Prostate gland (tissue), 2 donors: ENCODE measurements at regions of chr19 and their contacts with region 1.

Region 1: GRCh38 chr19:10870955-10871603 is at the start of gene CARM1:
- DNase-seq: peak; percentile 99
- H3K4me3 ChIP-seq: peak within 1 kb of the TSS; percentile 77 to 81
- H3K27ac ChIP-seq: peak within 1 kb of the TSS; percentile 74 to 80
- H3K4me1 ChIP-seq: no peaks in the 10 kb centered on the region
- H3K27me3 ChIP-seq: no peaks in the 10 kb centered on the region
- CTCF ChIP-seq: peak; percentile 55 to 98 (median 77)
- POLR2A ChIP-seq: peak; percentile 21
- total RNA-seq, gene CARM1: 14.5 to 54.4 TPM

Region 2: DNA sequence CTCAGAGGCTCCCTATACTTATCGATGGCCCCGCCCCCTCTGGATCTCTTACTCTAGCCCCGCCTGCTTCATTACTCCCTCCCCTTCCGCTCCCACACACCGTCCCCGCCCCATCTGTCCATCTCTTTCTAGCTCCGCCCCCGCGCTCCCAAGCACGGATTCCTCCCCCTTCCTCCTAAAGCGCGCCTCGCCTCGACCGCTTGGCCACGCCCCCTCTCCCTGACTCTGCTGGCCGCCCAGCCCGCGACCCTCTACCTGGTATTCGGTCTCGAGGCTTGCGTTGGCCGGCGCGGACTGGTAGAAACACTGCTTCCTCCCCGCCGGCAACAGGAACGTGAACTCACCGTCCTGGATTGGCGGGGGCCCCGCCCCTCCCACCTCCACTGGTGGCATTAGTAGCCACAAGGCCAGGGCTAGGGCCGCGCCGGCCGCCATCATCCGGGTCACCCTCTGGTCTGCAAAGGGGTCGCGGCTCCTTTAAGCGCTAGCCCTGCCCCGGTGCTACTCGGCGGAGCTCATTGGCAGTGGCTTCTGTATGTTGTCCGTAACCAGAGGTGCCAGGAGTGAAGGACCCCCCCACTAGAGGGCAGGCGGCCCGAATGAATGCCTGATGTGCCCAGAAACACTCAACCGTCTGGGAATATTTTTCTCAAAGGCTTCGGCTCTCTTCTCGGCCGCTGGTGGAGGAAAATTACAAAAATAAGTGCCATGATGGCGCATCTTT is 35.2 kb before region 1 on chr19 and contains the start of gene TMED1:
- intact Hi-C with region 1: loop called (anchors 2 kb)
- DNase-seq: peak; percentile 88
- H3K4me3 ChIP-seq: peak within 1 kb of the TSS; percentile 69 to 74
- H3K27ac ChIP-seq: peak within 1 kb of the TSS; percentile 98
- H3K4me1 ChIP-seq: no peaks in the 10 kb centered on the region
- H3K27me3 ChIP-seq: no peaks in the 10 kb centered on the region
- CTCF ChIP-seq: peak in 3 of 4 experiments; percentile 35 to 76 (median 69)
- POLR2A ChIP-seq: peak; percentile 56
- total RNA-seq, gene TMED1: 41.9 to 47.8 TPM

Region 3: DNA sequence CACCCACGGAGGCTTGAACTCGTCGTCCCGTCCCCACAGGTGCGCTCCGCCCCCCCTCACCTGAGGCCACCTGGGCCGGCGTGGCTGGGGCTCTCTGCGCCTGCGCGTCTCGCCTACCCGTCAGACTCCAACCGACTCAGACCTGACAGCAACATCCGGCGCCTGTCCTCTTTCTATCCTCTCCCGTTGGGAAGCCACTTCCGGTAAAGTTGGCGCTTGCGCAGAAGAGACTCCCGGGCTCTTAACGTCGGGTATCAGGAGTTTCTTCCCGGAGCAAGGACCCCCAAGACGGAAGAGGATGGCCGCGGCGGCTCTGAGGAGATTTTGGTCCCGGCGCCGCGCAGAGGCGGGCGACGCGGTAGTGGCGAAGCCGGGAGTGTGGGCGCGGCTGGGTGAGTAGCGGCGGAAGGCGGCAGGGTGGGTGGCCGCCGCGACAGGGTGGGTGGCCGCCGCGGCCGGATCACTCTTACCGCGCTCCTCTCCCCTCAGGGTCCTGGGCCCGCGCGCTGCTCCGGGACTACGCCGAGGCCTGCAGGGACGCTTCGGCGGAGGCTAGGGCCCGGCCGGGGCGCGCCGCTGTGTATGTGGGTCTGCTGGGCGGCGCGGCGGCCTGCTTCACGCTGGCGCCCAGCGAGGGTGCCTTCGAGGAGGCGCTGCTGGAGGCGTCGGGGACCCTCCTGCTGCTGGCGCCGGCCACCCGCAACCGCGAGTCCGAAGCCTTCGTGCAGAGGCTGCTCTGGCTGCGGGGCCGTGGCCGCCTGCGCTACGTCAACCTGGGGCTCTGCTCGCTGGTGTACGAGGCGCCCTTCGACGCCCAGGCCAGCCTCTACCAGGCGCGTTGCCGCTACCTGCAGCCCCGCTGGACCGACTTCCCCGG is 57.7 kb after region 1 on chr19 and contains the starts of genes TIMM29 and YIPF2:
- intact Hi-C with region 1: loop called (anchors 5 kb)
- DNase-seq: peak; percentile 98
- H3K4me3 ChIP-seq: peak within 1 kb of the TSS; percentile 95
- H3K27ac ChIP-seq: peak within 1 kb of the TSS; percentile 73 to 85
- H3K4me1 ChIP-seq: peaks cover 11% of the 10 kb centered on the region
- H3K27me3 ChIP-seq: no peaks in the 10 kb centered on the region
- CTCF ChIP-seq: peak in 3 of 4 experiments; percentile 16 to 35 (median 27)
- POLR2A ChIP-seq: peak; percentile 80
- total RNA-seq, gene TIMM29: 34.9 to 47.9 TPM
- total RNA-seq, gene YIPF2: 84.8 to 87.1 TPM

Region 4: GRCh38 chr19:11422163-11423021 is 551.3 kb after region 1 on chr19:
- intact Hi-C with region 1: no loop called
- DNase-seq: peak; percentile 68
- H3K4me3 ChIP-seq: no peak overlapping the region
- H3K27ac ChIP-seq: peak overlapping the region in 1 of 2 donors; percentile 49
- H3K4me1 ChIP-seq: no peaks in the 10 kb centered on the region
- H3K27me3 ChIP-seq: no peaks in the 10 kb centered on the region
- CTCF ChIP-seq: no peak
- POLR2A ChIP-seq: no peak